ENCODE measurements at regions of chr4 and their contacts with region 1.

Region 1: GRCh38 chr4:153142700-153143438 is 61.4 kb upstream of the TRIM2 start:
- DNase-seq: no peak
- ATAC-seq: peak; percentile 51
- H3K4me3 Mint-ChIP-seq: no peak overlapping the region
- H3K27ac Mint-ChIP-seq: no peak overlapping the region
- H3K4me1 Mint-ChIP-seq: peaks cover 15% of the 10 kb centered on the region
- H3K27me3 Mint-ChIP-seq: peaks cover 12% of the 10 kb centered on the region
- CTCF ChIP-seq: no peak

Region 2: DNA sequence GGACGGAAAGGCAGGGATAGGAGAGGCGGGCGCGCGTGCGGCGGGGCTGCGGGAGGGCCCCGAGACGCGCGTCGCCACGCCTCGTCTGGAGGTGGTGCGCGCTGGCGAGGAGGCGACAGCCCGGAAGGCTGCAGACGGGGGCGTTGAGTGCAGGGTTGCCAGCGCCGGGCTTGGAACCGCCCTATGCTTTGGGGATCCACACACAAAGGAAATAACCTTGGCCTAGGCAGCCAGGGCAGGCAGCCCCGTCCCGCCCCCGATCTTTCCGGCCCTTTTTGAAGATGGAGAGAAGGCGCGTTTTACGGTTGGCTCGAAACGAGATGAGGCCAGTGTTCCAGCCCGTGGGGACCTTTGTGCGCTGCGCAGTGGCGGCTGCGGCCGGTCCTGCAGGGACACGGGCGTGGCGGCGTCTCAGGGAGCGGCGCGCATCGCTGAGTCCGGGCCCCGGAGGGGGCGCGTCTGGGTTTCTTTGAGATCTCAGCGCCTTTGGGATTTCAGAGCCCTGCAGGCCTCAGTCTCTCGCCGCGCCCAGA is 10.5 kb after region 1 on chr4:
- CTCF ChIA-PET with region 1: interaction called, 14 read pairs
- POLR2A ChIA-PET with region 1: interaction called, 16 read pairs
- intact Hi-C with region 1: loop called (anchors 2 kb)
- DNase-seq: peak; percentile 63
- ATAC-seq: peak; percentile 76
- H3K4me3 Mint-ChIP-seq: peak overlapping the region; percentile 87
- H3K27ac Mint-ChIP-seq: peak overlapping the region; percentile 85
- H3K4me1 Mint-ChIP-seq: peaks cover 35% of the 10 kb centered on the region
- H3K27me3 Mint-ChIP-seq: peaks cover 30% of the 10 kb centered on the region
- CTCF ChIP-seq: no peak

Region 3: GRCh38 chr4:153310793-153311192 is 167.9 kb after region 1 on chr4:
- CTCF ChIA-PET with region 1: no interaction called
- POLR2A ChIA-PET with region 1: interaction called, 11 read pairs
- intact Hi-C with region 1: no loop called
- DNase-seq: no peak
- ATAC-seq: no peak
- H3K4me3 Mint-ChIP-seq: no peak overlapping the region
- H3K27ac Mint-ChIP-seq: no peak overlapping the region
- H3K4me1 Mint-ChIP-seq: no peaks in the 10 kb centered on the region
- H3K27me3 Mint-ChIP-seq: no peaks in the 10 kb centered on the region
- CTCF ChIP-seq: no peak

Region 4: GRCh38 chr4:153318696-153319320 is 175.9 kb after region 1 on chr4:
- CTCF ChIA-PET with region 1: interaction called, 10 read pairs
- POLR2A ChIA-PET with region 1: no interaction called
- intact Hi-C with region 1: loop called (anchors 1 kb)
- DNase-seq: no peak
- ATAC-seq: peak; percentile 65
- H3K4me3 Mint-ChIP-seq: no peak overlapping the region
- H3K27ac Mint-ChIP-seq: no peak overlapping the region
- H3K4me1 Mint-ChIP-seq: no peaks in the 10 kb centered on the region
- H3K27me3 Mint-ChIP-seq: no peaks in the 10 kb centered on the region
- CTCF ChIP-seq: peak; percentile 27

Region 5: GRCh38 chr4:153573881-153574802 is 431.3 kb after region 1 on chr4:
- CTCF ChIA-PET with region 1: no interaction called
- POLR2A ChIA-PET with region 1: no interaction called
- intact Hi-C with region 1: loop called (anchors 1 kb)
- DNase-seq: no peak
- ATAC-seq: peak; percentile 78
- H3K4me3 Mint-ChIP-seq: peak overlapping the region; percentile 32
- H3K27ac Mint-ChIP-seq: peak overlapping the region; percentile 82
- H3K4me1 Mint-ChIP-seq: peaks cover 77% of the 10 kb centered on the region
- H3K27me3 Mint-ChIP-seq: no peaks in the 10 kb centered on the region
- CTCF ChIP-seq: no peak

Region 6: DNA sequence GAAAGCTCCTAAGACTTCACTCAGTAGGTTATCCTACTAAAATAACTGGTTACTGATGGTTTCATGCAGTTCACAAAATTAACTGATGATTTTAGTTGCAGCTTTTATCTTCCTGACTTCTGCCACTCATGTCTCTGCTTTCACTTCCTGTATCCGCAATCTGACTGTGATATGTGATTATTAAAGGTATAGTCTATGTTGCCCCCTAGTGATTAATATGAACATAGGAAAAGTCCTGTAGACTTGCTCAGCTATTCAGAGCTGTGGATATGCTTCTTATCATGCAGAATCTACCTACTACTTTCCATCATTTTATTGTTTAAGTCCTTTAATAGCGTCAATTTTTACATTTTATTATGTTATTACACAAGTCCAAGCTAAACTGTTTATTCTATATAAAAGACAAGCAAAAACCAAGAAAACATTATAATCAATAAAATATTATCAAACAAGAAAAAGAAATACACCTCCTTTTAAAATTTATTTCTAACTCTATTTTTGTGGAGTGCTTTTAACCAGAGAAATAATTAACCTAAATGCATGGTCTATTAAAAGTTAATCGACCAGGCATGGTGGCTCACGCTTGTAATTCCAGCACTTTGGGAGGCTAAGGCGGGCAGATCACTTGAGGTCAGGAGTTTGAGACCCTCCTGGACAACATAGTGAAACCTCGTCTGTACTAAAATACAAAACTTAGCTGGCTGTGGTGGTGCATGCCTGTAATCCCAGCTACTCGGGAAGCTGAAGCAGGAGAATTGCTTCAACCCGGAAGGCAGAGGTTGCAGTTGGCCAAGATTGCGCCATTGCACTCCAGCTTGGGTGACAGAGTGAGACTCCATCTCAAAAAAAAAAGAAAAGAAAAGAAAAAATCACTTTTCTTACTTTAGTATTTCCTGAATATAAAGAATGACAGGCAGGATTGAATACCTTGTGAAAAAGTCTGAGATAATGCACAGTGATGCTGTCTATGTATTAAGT is 500.8 kb after region 1 on chr4:
- CTCF ChIA-PET with region 1: interaction called, 13 read pairs
- POLR2A ChIA-PET with region 1: no interaction called
- intact Hi-C with region 1: loop called (anchors 1 kb)
- DNase-seq: no peak
- ATAC-seq: peak; percentile 95
- H3K4me3 Mint-ChIP-seq: no peak overlapping the region
- H3K27ac Mint-ChIP-seq: no peak overlapping the region
- H3K4me1 Mint-ChIP-seq: peaks cover 10% of the 10 kb centered on the region
- H3K27me3 Mint-ChIP-seq: no peaks in the 10 kb centered on the region
- CTCF ChIP-seq: peak; percentile 36

Region 7: GRCh38 chr4:153750197-153750817 is 607.4 kb after region 1 on chr4:
- CTCF ChIA-PET with region 1: interaction called, 5 read pairs
- POLR2A ChIA-PET with region 1: no interaction called
- intact Hi-C with region 1: loop called (anchors 5 kb)
- DNase-seq: no peak
- ATAC-seq: peak; percentile 57
- H3K4me3 Mint-ChIP-seq: no peak overlapping the region
- H3K27ac Mint-ChIP-seq: no peak overlapping the region
- H3K4me1 Mint-ChIP-seq: no peaks in the 10 kb centered on the region
- H3K27me3 Mint-ChIP-seq: peaks cover 13% of the 10 kb centered on the region
- CTCF ChIP-seq: peak; percentile 19